Activated T-helper 1 cell treated with anti-CD3 and anti-CD28 coated beads, Interleukin-12 subunit alpha, Interleukin-12 subunit beta, Interleukin-2, Interleukin-4 antibody, amounts not matched to agents 30 ng/mL and 10 ng/mL and 1 ng/mL, durations not matched to agents 14 hours and 24 hours and 36 hours (primary cell): ENCODE measurements at regions of chr2 and their contacts with region 1.

Region 1: GRCh38 chr2:112764071-112765044 is at the start of gene CKAP2L:
- DNase-seq: peak; percentile 95
- H3K4me3 Mint-ChIP-seq: peak within 1 kb of the TSS; percentile 95
- H3K27ac Mint-ChIP-seq: peak within 1 kb of the TSS; percentile 93
- H3K4me1 Mint-ChIP-seq: peaks cover 50% of the 10 kb centered on the region
- H3K27me3 Mint-ChIP-seq: no peaks in the 10 kb centered on the region
- total RNA-seq, gene CKAP2L: 20.9 and 21.2 TPM in 2 replicates

Region 2: DNA sequence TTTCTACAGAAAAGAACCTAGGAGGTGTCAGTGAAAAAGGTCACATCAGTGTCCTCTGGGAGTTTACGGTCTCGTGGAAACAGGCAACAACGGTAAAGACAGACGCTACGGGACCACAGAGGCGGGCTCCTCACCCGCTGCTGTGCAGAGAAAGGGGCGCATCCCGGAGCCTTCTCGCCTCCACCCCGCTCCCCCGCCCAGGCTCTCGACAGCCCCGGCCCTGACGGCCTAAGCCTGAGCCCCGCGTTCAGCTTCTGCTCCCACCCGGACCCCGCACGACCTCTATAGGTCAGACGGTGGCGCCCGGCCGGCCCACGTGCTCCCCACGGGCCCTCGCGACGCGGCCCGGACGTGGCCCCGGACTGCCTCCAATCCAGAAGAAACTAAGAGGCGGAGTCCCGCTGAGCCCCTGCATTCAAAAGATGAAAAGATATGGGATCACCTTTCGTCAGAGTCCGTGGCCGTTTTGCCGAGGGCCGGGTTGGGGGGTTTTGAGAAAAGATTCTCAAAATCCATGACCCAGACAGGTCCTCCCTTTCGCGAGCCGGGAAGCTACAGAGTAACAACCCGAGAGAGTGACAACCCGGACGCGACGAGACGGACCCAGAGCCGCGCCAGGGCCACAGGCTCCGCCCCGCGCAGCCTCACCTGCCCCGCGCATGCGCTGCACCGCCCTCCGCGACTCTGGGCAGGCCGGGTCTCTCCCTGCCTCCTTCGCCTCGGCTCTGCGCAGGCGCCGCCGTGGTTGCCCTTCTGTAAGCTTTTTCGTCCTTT is 509.7 kb before region 1 on chr2 and contains the start of gene ZC3H8:
- intact Hi-C with region 1: loop called (anchors 10 kb)
- DNase-seq: peak; percentile 96
- H3K4me3 Mint-ChIP-seq: peak within 1 kb of the TSS; percentile 50
- H3K27ac Mint-ChIP-seq: peak within 1 kb of the TSS; percentile 91
- H3K4me1 Mint-ChIP-seq: peaks cover 27% of the 10 kb centered on the region
- H3K27me3 Mint-ChIP-seq: no peaks in the 10 kb centered on the region
- total RNA-seq, gene ZC3H8: 32.9 and 37.4 TPM in 2 replicates

Region 3: GRCh38 chr2:112481050-112481527 is 283.3 kb before region 1 on chr2:
- intact Hi-C with region 1: loop called (anchors 5 kb)
- DNase-seq: peak; percentile 79
- H3K4me3 Mint-ChIP-seq: peak overlapping the region; percentile 87
- H3K27ac Mint-ChIP-seq: peak overlapping the region; percentile 96
- H3K4me1 Mint-ChIP-seq: peaks cover 40% of the 10 kb centered on the region
- H3K27me3 Mint-ChIP-seq: peaks cover 4% of the 10 kb centered on the region

Region 4: DNA sequence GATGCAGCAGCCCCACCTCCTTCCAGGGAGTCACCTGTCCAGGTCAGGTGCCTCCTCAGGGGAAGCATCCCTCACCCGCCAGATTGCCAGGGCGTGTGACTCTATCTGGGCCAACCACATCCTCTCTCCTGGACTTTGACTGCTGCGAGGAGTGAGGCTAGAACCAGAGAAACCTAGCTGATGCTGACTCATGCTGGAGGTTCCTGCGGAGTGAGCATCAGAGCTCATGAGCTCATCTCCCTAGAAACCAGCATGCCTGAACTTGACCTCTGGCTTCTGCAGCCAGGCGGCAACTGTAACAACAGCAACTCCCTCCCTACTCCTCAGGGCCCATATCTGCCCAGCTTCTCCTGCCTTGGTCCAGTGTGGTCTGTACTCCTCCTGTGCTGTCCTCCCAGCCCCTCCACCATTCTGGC is 71.9 kb before region 1 on chr2:
- intact Hi-C with region 1: loop called (anchors 2 kb)
- DNase-seq: peak; percentile 73
- H3K4me3 Mint-ChIP-seq: peak overlapping the region; percentile 47
- H3K27ac Mint-ChIP-seq: peak overlapping the region; percentile 89
- H3K4me1 Mint-ChIP-seq: peaks cover 32% of the 10 kb centered on the region
- H3K27me3 Mint-ChIP-seq: no peaks in the 10 kb centered on the region

Region 5: DNA sequence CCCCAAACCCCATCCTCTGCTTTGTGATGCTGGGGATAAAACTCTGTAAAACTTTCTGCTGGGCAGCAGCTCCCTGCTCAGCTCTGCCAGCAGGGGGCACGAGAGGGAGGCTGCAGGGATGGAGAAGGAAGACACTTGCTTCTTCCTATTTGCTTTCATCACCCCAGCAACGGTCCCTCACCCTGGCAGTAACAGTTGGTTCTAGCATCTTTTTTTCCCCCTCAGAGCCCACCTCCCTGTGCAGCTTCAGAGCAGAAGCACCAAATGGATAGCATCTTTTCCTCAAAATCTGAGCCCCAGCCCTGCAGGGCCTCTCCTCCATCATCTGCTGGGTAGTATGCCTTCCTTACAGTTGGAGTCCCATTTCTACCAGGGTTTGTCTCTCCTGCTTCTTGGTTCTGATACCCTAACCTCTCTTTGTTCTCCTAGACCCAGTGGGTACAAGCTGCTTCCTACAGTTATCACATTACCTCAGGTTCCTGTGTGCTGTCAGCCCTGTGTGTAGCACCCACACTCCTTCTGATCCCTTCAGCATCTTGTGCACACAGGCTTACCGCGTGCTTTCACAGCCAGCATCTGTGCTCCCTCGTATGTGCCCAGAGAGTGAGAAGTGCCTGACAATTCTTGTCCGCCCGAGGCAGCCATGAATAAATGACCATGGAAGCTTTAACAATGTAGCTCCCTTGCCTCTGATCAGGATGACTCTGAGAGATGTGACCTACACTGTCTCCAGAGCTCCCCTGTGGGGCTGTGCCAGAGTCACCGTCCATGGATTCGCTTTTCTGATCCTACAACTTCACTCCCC is 14.4 kb before region 1 on chr2:
- intact Hi-C with region 1: loop called (anchors 1 kb)
- DNase-seq: peak; percentile 76
- H3K4me3 Mint-ChIP-seq: peak overlapping the region; percentile 29
- H3K27ac Mint-ChIP-seq: peak overlapping the region; percentile 77
- H3K4me1 Mint-ChIP-seq: peaks cover 58% of the 10 kb centered on the region
- H3K27me3 Mint-ChIP-seq: no peaks in the 10 kb centered on the region

Region 6: GRCh38 chr2:112803691-112804521 is 39.5 kb after region 1 on chr2:
- intact Hi-C with region 1: loop called (anchors 1 kb)
- DNase-seq: no peak
- H3K4me3 Mint-ChIP-seq: no peak overlapping the region
- H3K27ac Mint-ChIP-seq: peak overlapping the region; percentile 93
- H3K4me1 Mint-ChIP-seq: peaks cover 36% of the 10 kb centered on the region
- H3K27me3 Mint-ChIP-seq: peaks cover 2% of the 10 kb centered on the region

Region 7: GRCh38 chr2:112821142-112821541 is 56.8 kb after region 1 on chr2:
- intact Hi-C with region 1: loop called (anchors 1 kb)
- DNase-seq: peak; percentile 38
- H3K4me3 Mint-ChIP-seq: peak overlapping the region; percentile 32
- H3K27ac Mint-ChIP-seq: peak overlapping the region; percentile 79
- H3K4me1 Mint-ChIP-seq: peaks cover 39% of the 10 kb centered on the region
- H3K27me3 Mint-ChIP-seq: peaks cover 3% of the 10 kb centered on the region

Region 8: DNA sequence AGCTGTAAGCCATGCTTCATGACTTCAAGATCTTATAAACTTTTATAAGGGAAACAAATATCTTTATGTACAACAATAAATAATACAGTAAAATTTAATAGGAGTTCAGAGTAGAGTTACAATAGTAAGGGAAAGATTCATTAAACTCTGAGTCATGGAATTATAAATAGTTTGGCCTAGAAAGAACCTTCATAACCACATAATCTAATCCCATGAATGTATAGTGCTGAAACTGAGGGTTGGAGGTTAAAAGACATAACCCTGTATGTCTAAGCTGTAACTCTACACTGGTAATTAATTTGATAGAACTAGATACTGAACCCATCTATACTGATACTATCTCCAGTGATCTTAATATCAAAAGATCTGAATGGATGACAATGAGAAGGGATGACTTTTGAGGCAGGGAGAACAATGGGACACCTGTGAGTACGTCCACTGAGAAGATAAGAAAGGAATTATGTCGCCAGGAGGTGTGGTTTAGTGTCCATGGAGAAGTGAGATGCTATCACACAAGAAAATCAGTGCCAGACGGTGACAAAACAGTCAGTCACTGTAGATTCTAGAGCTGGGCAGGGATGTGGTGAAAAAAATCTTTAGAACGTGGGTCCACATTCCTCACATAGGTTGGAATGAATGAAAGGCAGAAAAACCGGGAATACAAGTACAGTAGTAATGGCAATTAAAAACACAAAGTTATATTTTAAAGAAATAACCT is 304.5 kb after region 1 on chr2:
- intact Hi-C with region 1: no loop called
- DNase-seq: no peak
- H3K4me3 Mint-ChIP-seq: no peak overlapping the region
- H3K27ac Mint-ChIP-seq: no peak overlapping the region
- H3K4me1 Mint-ChIP-seq: no peaks in the 10 kb centered on the region
- H3K27me3 Mint-ChIP-seq: peaks cover 8% of the 10 kb centered on the region